ENCODE measurements at regions of chr3 and their contacts with region 1.

Region 1: DNA sequence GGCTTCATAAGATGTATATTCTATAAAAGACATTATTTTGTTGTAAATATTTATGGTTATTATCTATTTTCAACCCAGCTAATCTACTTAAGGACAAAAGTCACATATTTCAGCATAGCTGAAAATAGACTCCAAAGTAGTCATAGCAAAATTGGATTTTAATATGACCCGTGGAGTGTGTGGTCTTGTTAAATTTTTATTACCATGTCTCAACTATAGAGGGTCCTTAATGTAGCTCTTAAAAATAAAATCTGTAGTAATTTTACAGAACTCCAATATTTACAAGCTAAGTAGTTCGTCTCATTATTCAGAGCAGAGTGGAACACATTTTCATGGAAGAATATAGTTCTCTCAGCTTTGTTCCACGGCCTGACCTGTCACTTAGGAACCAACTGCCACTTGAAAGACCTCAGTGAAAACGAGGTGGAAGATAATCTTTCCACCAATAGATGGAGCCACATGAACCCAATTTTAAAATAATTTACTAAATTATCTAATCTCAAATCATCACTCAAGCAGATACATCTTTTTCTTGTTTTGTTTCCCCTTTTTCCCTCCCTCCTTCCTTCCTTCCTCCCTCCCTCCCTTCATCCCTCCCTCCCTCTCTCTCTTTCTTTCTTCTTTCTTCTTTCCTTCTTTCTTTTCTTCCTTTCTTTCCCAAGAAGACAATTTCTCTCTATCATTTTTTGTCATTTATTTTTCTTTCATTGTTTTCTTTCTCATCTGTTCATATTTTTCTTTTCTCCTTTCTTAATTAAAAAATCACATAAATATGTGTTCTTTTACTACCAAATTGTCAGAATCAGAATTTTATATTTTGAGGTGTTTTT is 97.2 kb downstream of the CLDN1 start:
- DNase-seq: peak in 1 of 2 experiments; percentile 12
- H3K4me3 ChIP-seq: no peak overlapping the region
- H3K27ac ChIP-seq: no peak overlapping the region
- H3K4me1 ChIP-seq: peaks cover 12% of the 10 kb centered on the region
- H3K27me3 ChIP-seq: no peaks in the 10 kb centered on the region
- CTCF ChIP-seq: peak; percentile 74

Region 2: DNA sequence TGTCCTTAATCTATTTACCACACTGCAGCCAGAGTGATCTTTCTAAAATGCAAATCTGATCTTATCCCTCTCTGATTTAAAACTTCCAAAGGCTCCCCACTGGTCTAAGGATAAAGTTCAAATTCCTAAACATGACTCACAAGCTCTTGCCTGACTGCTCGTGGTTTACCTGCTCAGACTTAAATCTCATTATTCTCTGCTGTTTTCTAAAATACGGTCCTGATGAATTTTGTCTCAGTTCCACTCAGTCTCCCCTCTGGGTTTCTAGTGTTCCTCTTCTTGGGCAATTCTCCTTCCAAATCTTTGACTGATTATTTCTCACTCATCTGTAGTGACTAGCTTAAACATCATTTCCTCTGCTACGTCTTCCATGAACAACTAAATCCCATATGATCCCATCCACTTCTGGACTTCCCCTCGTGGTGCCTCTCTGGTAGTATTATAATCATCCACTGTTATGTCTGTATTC is 212.7 kb before region 1 on chr3:
- CTCF ChIA-PET with region 1: no interaction called
- POLR2A ChIA-PET with region 1: no interaction called
- intact Hi-C with region 1: loop called (anchors 1 kb)
- DNase-seq: peak; percentile 20 to 91
- H3K4me3 ChIP-seq: peak overlapping the region; percentile 25; the same call in 1 of the 2 replicates
- H3K27ac ChIP-seq: peak overlapping the region; percentile 74
- H3K4me1 ChIP-seq: peaks cover 45% of the 10 kb centered on the region
- H3K27me3 ChIP-seq: no peaks in the 10 kb centered on the region
- CTCF ChIP-seq: no peak

Region 3: DNA sequence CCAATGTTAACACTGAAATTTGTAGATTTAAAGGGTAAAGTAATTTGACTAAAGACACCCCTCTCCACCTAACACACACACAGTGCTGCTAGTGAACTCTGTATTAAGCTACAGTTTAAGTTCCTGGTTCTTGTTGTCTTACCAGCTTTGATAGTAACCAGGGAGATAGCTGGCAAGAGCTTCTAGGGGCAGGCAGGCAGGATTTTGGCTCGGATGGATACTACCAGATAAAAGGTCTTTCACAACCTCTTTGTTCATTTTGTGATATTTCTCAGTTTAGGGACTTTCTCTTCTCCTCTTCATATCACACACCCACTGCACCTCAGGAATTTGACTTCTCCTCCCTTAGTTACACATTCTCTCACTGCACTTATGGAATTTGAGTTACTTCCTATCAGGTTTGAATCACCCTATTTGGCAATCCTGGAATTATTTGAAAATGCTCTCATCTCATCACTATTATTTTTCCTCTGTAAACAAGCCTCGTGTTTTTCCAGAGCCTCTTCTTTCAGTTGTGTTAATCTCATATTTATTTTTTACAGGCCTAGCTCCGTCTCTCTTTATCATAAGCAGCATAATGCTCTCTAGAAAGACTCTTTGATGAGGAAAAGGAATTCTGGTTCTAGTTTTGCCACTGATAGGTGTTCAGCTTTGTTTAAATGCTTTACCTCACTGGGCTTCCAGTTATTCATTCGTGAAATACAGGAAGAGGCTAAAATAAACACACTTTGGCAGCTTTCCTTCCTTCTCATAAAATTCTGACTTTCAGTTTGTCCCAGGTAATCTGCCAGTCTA is 120.1 kb after region 1 on chr3:
- CTCF ChIA-PET with region 1: no interaction called
- POLR2A ChIA-PET with region 1: no interaction called
- intact Hi-C with region 1: loop called (anchors 1 kb)
- DNase-seq: peak; percentile 79 to 100
- H3K4me3 ChIP-seq: peak overlapping the region; percentile 50; the same call in 1 of the 2 replicates
- H3K27ac ChIP-seq: peak overlapping the region; percentile 98
- H3K4me1 ChIP-seq: peaks cover 40% of the 10 kb centered on the region
- H3K27me3 ChIP-seq: no peaks in the 10 kb centered on the region
- CTCF ChIP-seq: no peak

Region 4: DNA sequence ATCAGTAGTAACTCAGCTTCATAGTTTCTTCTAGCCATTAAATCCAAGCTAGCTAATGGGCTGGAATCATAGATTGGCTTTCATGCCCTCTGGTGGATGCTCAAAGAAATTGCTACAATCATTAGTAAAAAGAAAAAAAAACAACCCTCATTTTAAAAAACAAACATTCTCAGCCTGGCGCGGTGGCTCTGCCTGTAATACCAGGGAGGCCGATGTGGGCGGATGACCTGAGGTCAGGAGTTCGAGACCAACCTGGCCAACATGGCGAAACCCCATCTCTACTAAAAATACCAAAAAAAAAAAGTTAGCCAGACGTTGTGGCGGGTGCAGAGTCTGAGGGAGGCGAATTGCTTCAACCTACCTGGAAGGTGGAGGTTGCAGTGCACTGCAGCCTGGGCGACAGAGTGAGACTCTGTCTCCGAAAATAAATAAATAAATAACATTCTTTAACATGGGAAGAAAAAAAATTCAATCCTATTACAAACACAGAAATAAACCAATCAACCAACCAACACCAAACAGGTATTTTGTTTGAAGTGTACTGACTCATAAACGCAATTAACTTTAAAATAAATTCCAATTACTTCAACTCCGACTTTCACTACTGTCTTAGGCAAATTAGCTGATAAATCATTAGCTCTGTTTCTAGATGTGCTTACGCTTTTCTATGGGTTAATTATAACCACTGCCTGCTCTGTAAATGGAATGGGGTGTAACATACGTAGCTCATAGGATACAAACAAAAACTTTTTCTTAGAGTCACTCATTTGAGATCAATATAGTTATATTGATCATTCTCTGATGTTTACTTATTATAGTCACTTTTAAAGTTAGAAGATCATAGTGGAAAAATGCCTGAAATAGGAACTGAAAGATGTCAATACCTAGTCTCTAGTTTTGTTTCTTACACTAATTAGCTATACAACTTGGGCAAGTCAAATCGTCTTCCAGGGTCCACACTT is 199.7 kb after region 1 on chr3:
- CTCF ChIA-PET with region 1: interaction called, 5 read pairs
- POLR2A ChIA-PET with region 1: interaction called, 6 read pairs
- intact Hi-C with region 1: loop called (anchors 1 kb)
- DNase-seq: peak; percentile 70 to 73
- H3K4me3 ChIP-seq: no peak overlapping the region
- H3K27ac ChIP-seq: no peak overlapping the region
- H3K4me1 ChIP-seq: no peaks in the 10 kb centered on the region
- H3K27me3 ChIP-seq: no peaks in the 10 kb centered on the region
- CTCF ChIP-seq: peak; percentile 95

Region 5: DNA sequence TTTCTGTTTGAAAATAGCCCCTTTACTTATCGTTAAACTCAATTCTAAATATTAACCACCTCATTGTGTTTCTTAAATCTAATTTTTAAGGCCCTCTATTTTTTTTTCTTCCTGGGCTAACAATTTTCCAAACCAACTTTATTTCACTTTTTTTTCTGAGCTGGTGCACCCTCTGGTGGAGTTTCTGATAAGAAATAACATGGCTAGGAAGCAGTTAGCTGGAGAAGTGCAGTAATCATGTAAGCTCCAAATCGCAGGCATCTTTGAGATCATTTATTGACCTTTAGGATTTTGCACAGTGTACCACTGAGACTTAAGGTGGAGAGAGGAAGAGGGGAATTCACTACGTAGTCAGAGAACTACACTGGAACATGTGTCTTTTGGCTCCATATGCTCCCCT is 218.2 kb after region 1 on chr3:
- CTCF ChIA-PET with region 1: no interaction called
- POLR2A ChIA-PET with region 1: no interaction called
- intact Hi-C with region 1: loop called (anchors 5 kb)
- DNase-seq: no peak
- H3K4me3 ChIP-seq: no peak overlapping the region
- H3K27ac ChIP-seq: no peak overlapping the region
- H3K4me1 ChIP-seq: peaks cover 17% of the 10 kb centered on the region
- H3K27me3 ChIP-seq: no peaks in the 10 kb centered on the region
- CTCF ChIP-seq: peak; percentile 72

Region 6: GRCh38 chr3:190566043-190566933 is 341.2 kb after region 1 on chr3:
- CTCF ChIA-PET with region 1: no interaction called
- POLR2A ChIA-PET with region 1: no interaction called
- intact Hi-C with region 1: loop called (anchors 10 kb)
- DNase-seq: peak; percentile 94 to 100
- H3K4me3 ChIP-seq: no peak overlapping the region
- H3K27ac ChIP-seq: peak overlapping the region; percentile 82
- H3K4me1 ChIP-seq: peaks cover 33% of the 10 kb centered on the region
- H3K27me3 ChIP-seq: no peaks in the 10 kb centered on the region
- CTCF ChIP-seq: no peak

Measured in PC-9 (cell line).